Heart left ventricle (tissue), 16 donors: ENCODE measurements at regions of chr16 and their contacts with region 1.

Region 1: GRCh38 chr16:56681939-56682702 is at the start of gene MT1X:
- DNase-seq: peak; percentile 90 to 96 (median 96)
- ATAC-seq: peak; percentile 95 to 98 (median 97)
- H3K4me3 ChIP-seq: peak within 1 kb of the TSS; percentile 27 to 69 (median 62)
- H3K27ac ChIP-seq: peak within 1 kb of the TSS; percentile 70 to 88 (median 84)
- H3K4me1 ChIP-seq: peaks cover 0 to 51% (median 23%) of the 10 kb centered on the region in 12 donors
- H3K27me3 ChIP-seq: no peaks in the 10 kb centered on the region
- CTCF ChIP-seq: no peak
- POLR2A ChIP-seq: peak; percentile 69 to 97
- total RNA-seq, gene MT1X: 20.6 to 918 (median 77.7) TPM

Region 2: GRCh38 chr16:56519459-56520250 is 162.5 kb before region 1 on chr16 and contains the start of gene BBS2:
- intact Hi-C with region 1: loop called in 1 of 10 experiments (anchors 5 kb)
- DNase-seq: peak; percentile 91 to 96 (median 93)
- ATAC-seq: peak; percentile 92 to 98 (median 97)
- H3K4me3 ChIP-seq: peak within 1 kb of the TSS; percentile 45 to 100 (median 90)
- H3K27ac ChIP-seq: peak within 1 kb of the TSS; percentile 64 to 94 (median 87)
- H3K4me1 ChIP-seq: peaks cover 0 to 48% (median 32%) of the 10 kb centered on the region in 12 donors
- H3K27me3 ChIP-seq: no peaks in the 10 kb centered on the region
- CTCF ChIP-seq: peak in 2 of 12 donors; percentile 9 to 12
- POLR2A ChIP-seq: peak in 1 of 2 donors; percentile 86
- total RNA-seq, gene BBS2: 31.2 to 76.2 (median 49.4) TPM

Region 3: DNA sequence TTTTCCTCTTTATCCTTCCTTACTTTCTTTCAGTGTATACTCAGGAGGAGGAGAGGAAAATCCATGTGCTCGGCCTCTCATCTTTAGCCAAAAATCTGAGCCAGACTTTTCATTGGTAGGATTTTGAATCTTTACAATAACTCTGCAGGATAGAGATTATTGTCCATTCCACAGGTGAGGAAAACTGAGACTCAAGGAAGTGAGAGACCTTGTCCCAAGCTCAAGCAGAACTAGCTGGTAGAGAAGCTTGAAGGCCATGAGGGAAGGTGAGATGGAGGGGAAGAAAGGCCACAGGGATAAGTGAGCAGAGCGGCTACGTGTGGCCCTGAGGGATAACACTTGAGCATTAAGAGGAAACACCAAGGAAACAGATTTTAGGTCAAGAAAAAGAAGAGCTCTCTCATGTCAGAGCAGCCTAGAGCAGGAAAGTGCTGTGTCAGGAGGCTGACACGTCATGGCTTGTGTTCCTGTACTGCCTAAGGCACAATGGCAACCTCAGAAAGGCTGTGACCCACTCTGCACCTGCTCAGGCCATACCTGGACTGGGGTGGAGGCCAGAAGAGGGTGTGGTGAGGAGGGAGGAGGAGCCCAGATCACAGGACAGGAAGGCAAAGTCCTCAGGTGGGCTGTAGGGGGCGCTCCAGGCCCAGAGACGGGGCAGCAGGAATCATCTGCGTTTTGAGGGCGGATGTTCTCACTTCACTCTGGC is 105.4 kb before region 1 on chr16:
- intact Hi-C with region 1: no loop called
- DNase-seq: peak; percentile 59 to 84 (median 65)
- ATAC-seq: peak; percentile 47 to 86 (median 74)
- H3K4me3 ChIP-seq: no peak overlapping the region
- H3K27ac ChIP-seq: no peak overlapping the region
- H3K4me1 ChIP-seq: no peaks in the 10 kb centered on the region
- H3K27me3 ChIP-seq: no peaks in the 10 kb centered on the region
- CTCF ChIP-seq: peak; percentile 51 to 82 (median 66)
- POLR2A ChIP-seq: no peak

Region 4: DNA sequence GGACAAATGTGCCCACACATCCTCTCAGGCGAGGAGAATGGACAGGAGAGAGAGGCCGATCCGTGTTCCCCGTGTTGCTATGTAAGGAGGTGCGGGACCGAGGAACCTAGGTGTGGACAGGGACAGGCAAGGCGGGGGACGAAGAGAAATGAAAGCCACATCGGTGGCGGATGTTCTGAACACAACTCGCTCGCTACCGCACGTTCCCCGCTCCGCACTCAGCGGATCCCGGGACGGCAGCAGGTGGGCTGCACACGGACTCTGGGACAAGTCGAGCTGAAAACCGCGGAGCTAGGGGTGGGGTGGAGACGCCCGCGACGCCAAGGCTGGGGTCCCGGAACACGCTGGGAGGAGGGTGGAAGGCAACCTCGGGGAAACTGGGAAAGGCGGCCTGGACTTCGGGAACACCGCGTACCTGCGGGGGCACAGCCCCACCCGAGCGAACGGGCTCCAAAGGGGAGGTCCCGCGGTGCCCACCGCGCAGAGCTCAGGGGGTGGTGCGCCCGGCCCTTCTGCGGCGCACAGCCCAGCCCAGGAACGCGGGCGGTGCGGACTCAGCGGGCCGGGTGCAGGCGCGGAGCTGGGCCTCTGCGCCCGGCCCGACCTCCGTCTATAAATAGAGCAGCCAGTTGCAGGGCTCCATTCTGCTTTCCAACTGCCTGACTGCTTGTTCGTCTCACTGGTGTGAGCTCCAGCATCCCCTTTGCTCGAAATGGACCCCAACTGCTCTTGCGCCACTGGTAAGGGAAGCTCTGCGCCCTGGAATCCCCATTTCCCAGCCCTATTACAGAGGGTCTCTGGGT is 56.8 kb before region 1 on chr16 and contains the start of gene MT1E:
- intact Hi-C with region 1: loop called in 1 of 10 experiments (anchors 5 kb)
- DNase-seq: peak; percentile 82 to 90 (median 90)
- ATAC-seq: peak; percentile 88 to 94 (median 91)
- H3K4me3 ChIP-seq: peak within 1 kb of the TSS; percentile 56 to 95 (median 70)
- H3K27ac ChIP-seq: peak within 1 kb of the TSS; percentile 81 to 99 (median 96)
- H3K4me1 ChIP-seq: peaks cover 0 to 30% (median 14%) of the 10 kb centered on the region in 12 donors
- H3K27me3 ChIP-seq: no peaks in the 10 kb centered on the region
- CTCF ChIP-seq: no peak
- POLR2A ChIP-seq: peak in 1 of 2 donors; percentile 90
- total RNA-seq, gene MT1E: 64.8 to 192 (median 103) TPM

Region 5: GRCh38 chr16:56632156-56632847 is 49.8 kb before region 1 on chr16 and contains the start of gene MT1M:
- intact Hi-C with region 1: loop called in 3 of 10 experiments (anchors 1 to 5 kb)
- DNase-seq: peak; percentile 44 to 79 (median 72)
- ATAC-seq: peak; percentile 68 to 85 (median 79)
- H3K4me3 ChIP-seq: peak within 1 kb of the TSS; percentile 28 to 75 (median 58)
- H3K27ac ChIP-seq: peak within 1 kb of the TSS; percentile 25 to 81 (median 72)
- H3K4me1 ChIP-seq: peaks cover 0 to 31% (median 8%) of the 10 kb centered on the region in 12 donors
- H3K27me3 ChIP-seq: peaks cover 0 to 55% (median 19%) of the 10 kb centered on the region in 9 donors
- CTCF ChIP-seq: no peak
- POLR2A ChIP-seq: peak in 1 of 2 donors; percentile 51
- total RNA-seq, gene MT1M: 0.61 to 16.2 (median 2.2) TPM

Region 6: DNA sequence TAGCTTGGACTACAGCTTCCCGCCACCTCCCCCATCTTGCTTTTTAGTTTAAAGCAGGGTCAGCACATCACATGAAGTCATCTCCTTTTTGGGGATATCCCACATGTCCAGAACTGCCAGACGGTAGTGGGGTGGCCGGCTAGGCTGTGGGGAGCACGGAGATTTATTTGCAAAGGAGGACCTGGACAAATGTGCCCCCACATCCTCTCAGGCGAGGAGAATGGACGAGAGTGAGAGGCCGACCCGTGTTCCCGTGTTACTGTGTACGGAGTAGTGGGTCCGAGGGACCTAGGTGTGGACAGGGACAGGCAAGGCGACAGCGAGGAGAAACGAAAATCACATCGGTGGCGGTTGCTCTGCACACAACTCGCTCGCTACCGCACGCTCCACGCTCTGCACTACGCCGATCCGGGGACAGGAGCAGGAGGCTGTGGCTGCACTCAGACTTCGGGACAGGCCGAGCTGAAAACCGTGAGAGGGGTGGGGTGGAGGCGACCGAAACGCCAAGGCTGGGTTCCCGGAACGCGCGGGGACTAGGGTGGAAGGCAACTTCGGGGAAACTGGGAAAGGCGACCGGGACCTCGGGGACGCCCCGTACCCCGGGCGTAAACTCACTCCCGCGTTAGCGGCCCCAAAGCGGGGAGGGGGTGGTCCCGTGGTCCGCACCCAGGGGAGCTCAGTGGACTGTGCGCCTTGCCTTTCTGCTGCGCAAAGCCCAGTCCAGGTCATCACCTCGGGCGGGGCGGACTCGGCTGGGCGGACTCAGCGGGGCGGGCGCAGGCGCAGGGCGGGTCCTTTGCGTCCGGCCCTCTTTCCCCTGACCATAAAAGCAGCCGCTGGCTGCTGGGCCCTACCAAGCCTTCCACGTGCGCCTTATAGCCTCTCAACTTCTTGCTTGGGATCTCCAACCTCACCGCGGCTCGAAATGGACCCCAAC is 44.0 kb before region 1 on chr16 and contains the start of gene MT1A:
- intact Hi-C with region 1: loop called in 1 of 10 experiments (anchors 5 kb)
- DNase-seq: peak; percentile 78 to 90 (median 88)
- ATAC-seq: peak; percentile 86 to 93 (median 91)
- H3K4me3 ChIP-seq: peak within 1 kb of the TSS; percentile 22 to 67 (median 58)
- H3K27ac ChIP-seq: peak within 1 kb of the TSS; percentile 17 to 83 (median 57)
- H3K4me1 ChIP-seq: peaks cover 0 to 34% (median 14%) of the 10 kb centered on the region in 12 donors
- H3K27me3 ChIP-seq: peaks cover 0 to 83% (median 31%) of the 10 kb centered on the region in 9 donors
- CTCF ChIP-seq: no peak
- POLR2A ChIP-seq: peak in 1 of 2 donors; percentile 74
- total RNA-seq, gene MT1A: 0.92 to 30.1 (median 3.3) TPM

Region 7: DNA sequence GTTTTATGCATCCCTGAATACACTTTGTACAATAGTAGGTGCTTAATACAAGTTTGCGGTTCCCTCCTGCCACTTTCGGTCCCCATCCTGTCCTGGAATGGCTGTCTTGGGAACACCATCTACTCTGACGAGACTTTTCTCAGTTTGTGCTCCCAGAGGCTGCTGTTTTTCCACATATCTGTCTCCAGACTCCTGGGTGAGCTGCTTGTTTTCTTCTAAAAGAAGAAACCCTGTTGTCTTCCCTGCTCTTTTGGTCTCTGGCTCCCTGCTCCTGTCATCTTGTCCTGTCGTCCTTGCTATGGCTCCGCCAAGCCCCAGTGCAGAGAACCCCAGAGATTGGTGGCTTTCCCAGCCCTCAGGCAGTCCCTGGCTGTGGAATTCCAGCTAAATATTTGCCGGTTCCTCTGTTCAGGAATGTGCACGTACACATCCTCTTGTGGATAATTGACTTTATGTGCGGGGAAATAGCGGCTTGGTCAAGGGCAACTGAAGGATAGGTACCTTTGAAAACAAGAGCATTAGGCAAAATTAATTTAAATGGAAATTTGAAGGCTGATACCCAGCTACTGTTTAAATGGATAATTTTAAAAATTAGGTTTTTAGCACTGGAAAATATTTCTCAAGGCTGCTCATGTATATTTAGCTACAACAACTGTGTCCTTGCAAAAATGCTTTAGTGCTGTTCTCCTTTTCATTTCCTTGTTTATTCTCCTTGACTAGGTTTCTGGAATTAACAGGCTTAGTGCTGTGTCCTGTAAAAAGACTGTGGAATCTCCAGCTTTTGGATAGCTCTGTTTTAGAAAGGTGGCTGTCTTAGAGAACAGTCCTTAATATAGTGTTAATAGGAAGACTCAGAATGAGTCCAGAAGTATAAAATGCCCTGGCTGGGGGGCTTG is 132.7 kb after region 1 on chr16:
- intact Hi-C with region 1: no loop called
- DNase-seq: no peak
- ATAC-seq: peak in 1 of 4 donors; percentile 48
- H3K4me3 ChIP-seq: no peak overlapping the region
- H3K27ac ChIP-seq: no peak overlapping the region
- H3K4me1 ChIP-seq: peaks cover 0 to 5% (median 0%) of the 10 kb centered on the region in 12 donors
- H3K27me3 ChIP-seq: no peaks in the 10 kb centered on the region
- CTCF ChIP-seq: no peak
- POLR2A ChIP-seq: no peak